OCI-LY7 (cell line): ENCODE measurements at regions of chr17 and their contacts with region 1.

Region 1: DNA sequence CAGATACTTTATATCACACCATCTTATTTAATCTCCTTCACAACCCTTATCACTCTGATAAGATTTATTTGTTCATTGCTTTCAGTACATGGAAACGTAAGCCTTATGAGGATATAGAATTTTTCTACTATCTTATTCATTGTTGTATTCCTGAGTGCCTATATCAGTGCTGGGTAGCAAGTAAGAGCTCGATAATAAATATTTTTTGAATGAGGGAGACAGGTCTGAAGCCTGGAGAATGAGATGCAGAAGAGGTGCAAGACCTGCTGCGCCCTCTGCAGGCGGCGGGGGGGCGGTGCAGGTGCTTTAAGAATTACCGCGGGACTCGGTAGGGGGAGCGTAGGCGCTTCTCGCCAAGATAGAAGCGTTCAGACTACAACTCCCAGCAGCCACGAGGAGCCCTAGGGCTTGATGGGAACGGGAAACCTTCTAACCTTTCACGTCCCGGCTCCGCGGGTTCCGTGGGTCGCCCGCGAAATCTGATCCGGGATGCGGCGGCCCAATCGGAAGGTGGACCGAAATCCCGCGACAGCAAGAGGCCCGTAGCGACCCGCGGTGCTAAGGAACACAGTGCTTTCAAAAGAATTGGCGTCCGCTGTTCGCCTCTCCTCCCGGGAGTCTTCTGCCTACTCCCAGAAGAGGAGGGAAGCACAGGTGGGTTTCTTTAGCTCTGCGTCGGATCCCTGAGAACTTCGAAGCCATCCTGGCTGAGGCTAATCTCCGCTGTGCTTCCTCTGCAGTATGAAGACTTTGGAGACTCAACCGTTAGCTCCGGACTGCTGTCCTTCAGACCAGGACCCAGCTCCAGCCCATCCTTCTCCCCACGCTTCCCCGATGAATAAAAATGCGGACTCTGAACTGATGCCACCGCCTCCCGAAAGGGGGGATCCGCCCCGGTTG is at the start of gene WRAP53:
- DNase-seq: peak; percentile 98
- H3K4me3 ChIP-seq: peak within 1 kb of the TSS; percentile 92
- H3K27ac ChIP-seq: peak within 1 kb of the TSS; percentile 93
- H3K4me1 ChIP-seq: peaks cover 27% of the 10 kb centered on the region
- CTCF ChIP-seq: peak; percentile 100
- total RNA-seq, gene WRAP53: 30.7 and 39.3 TPM in 2 replicates

Region 2: GRCh38 chr17:7329374-7329996 is 358.7 kb before region 1 on chr17:
- CTCF ChIA-PET with region 1: no interaction called
- POLR2A ChIA-PET with region 1: no interaction called
- intact Hi-C with region 1: loop called (anchors 5 kb)
- DNase-seq: peak; percentile 100
- H3K4me3 ChIP-seq: peak overlapping the region; percentile 82
- H3K27ac ChIP-seq: peak overlapping the region; percentile 96
- H3K4me1 ChIP-seq: peaks cover 42% of the 10 kb centered on the region
- CTCF ChIP-seq: no peak

Region 3: DNA sequence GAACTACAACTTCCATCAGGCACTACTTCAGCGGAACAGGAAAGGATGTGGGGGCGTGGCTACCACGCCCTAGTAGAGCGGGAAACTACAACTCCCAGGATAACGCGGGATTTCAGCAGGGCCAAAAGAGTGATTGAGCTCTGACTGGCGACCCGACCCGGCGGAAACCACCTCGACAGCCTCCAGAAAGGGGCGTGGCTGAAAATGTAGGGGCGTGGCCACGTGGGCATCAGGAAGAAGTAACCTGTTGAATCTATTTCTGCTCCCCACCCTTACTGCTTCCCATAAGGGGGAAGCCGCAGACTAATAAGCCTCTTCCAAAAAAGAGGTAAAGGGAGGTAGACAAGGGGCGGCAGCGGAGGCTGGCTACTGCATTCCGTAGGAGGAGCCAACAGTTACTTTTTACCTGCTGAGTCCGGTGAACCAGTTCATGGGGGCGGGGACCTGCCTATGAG is 252.9 kb before region 1 on chr17 and contains the start of gene TMEM102:
- CTCF ChIA-PET with region 1: no interaction called
- POLR2A ChIA-PET with region 1: no interaction called
- intact Hi-C with region 1: loop called (anchors 1 kb)
- DNase-seq: peak; percentile 99
- H3K4me3 ChIP-seq: peak within 1 kb of the TSS; percentile 76
- H3K27ac ChIP-seq: peak within 1 kb of the TSS; percentile 77
- H3K4me1 ChIP-seq: peaks cover 32% of the 10 kb centered on the region
- CTCF ChIP-seq: no peak
- total RNA-seq, gene TMEM102: 13.4 and 15.6 TPM in 2 replicates

Region 4: GRCh38 chr17:7572588-7573323 is 115.4 kb before region 1 on chr17:
- CTCF ChIA-PET with region 1: no interaction called
- POLR2A ChIA-PET with region 1: no interaction called
- intact Hi-C with region 1: loop called (anchors 5 kb)
- DNase-seq: peak; percentile 99
- H3K4me3 ChIP-seq: peak overlapping the region; percentile 99
- H3K27ac ChIP-seq: peak overlapping the region; percentile 94
- H3K4me1 ChIP-seq: peaks cover 49% of the 10 kb centered on the region
- CTCF ChIP-seq: no peak

Region 5: GRCh38 chr17:7593296-7593695 is 94.9 kb before region 1 on chr17:
- CTCF ChIA-PET with region 1: no interaction called
- POLR2A ChIA-PET with region 1: no interaction called
- intact Hi-C with region 1: no loop called
- DNase-seq: no peak
- H3K4me3 ChIP-seq: no peak overlapping the region
- H3K27ac ChIP-seq: no peak overlapping the region
- H3K4me1 ChIP-seq: no peaks in the 10 kb centered on the region
- CTCF ChIP-seq: no peak

Region 6: DNA sequence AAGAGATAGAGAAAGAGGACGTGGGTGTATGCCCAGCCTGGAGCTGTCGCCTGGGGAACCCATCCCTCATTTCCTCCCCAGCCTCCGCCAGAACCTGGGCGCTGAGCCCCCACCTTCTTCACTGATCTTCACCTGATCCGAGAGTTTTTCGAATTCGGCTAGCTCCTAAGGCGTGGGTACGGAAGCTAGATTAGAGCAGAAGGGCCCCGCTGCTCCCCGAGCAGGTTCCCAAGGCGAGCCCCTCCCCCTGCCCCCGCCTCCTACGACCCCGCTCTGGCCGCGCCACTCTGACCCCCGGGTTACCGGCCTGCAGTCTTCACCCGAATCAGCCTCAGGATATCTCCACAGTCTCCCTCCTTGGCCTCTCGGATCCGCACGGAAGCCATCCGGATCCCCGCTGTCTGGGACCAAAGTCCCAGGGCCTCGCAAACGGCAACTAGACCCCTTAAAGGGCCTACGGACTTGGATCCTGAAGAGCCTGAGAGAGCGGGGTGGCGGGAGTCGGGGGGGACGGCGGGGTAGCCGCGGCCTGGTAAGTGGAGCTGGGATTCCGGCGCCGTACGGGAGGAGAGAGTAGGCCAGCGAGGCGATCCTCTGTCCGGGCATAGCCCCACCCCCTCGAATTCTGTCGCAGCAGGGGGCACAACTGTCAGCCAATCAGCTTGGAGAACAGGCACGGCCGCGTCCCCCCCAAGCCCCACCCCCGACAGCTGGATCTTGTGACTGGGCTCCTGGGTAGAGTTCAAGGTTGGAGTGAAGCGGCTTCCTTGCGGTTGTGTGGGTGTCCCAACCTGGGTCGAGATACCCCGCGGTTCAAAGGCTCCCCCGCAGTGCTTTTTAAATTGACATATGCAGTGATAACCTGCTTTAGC is 60.7 kb before region 1 on chr17 and contains the start of gene SAT2:
- CTCF ChIA-PET with region 1: no interaction called
- POLR2A ChIA-PET with region 1: interaction called, 6 read pairs
- intact Hi-C with region 1: loop called (anchors 2 kb)
- DNase-seq: peak; percentile 82
- H3K4me3 ChIP-seq: peak within 1 kb of the TSS; percentile 75
- H3K27ac ChIP-seq: no peak within 1 kb of the TSS
- H3K4me1 ChIP-seq: peaks cover 4% of the 10 kb centered on the region
- CTCF ChIP-seq: no peak
- total RNA-seq, gene SAT2: 16.0 and 16.9 TPM in 2 replicates

Region 7: GRCh38 chr17:7673239-7673638 is 14.9 kb before region 1 on chr17:
- CTCF ChIA-PET with region 1: no interaction called
- POLR2A ChIA-PET with region 1: interaction called, 10 read pairs
- intact Hi-C with region 1: no loop called
- DNase-seq: peak; percentile 29
- H3K4me3 ChIP-seq: no peak overlapping the region
- H3K27ac ChIP-seq: no peak overlapping the region
- H3K4me1 ChIP-seq: no peaks in the 10 kb centered on the region
- CTCF ChIP-seq: peak; percentile 80

Region 8: DNA sequence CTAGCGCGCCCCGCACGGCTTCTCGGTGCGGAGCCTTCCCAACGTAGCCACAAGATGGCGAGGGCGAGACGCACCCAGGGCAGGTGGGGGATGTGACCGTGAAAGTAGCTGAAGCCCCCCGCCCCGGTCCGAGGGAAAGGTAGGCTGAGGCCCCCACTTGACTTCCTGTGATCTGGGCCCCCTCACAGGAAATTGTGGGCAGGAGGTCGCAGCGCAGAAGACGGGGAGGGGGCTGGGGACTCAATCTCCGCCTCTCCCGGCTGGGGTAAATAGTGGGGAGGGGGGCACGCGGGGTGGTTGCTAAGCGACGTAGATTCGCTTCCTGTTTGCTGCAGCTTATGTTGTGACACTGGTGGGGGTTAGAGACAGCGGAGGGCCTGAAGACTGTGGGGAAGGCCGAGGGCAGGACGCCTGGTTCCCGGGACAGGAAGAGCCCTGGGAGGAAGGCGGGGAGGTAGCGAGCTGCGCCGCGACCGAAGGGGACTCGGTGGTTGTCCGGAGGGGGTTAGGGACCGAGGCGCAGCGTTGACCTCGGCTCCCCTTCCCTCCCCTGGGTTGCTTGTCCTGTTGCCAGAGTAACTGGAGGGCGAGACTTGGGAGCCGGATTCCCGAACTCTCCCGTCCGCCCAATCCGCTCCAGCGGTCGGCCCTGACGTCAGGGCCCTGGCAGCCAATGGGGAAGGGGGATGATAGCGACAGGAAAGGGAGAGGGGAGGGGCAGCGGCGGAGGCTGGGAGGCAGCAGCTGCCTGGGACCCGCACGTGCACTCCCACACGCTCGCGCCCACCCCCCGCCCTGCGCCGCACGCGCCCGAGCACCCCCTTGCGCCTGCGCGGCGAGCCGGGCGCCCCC is 147.0 kb after region 1 on chr17:
- CTCF ChIA-PET with region 1: no interaction called
- POLR2A ChIA-PET with region 1: interaction called, 3 read pairs
- intact Hi-C with region 1: loop called (anchors 5 kb)
- DNase-seq: peak; percentile 95
- H3K4me3 ChIP-seq: peak overlapping the region; percentile 78
- H3K27ac ChIP-seq: peak overlapping the region; percentile 91
- H3K4me1 ChIP-seq: peaks cover 40% of the 10 kb centered on the region
- CTCF ChIP-seq: peak; percentile 81